Activated naive CD4-positive, alpha-beta T cell treated with anti-CD3 and anti-CD28 coated beads, Interleukin-2, amount 10 ng/mL, durations not matched to agents 7 days and 5 days (primary cell): ENCODE measurements at regions of chr7 and their contacts with region 1.

Region 1: DNA sequence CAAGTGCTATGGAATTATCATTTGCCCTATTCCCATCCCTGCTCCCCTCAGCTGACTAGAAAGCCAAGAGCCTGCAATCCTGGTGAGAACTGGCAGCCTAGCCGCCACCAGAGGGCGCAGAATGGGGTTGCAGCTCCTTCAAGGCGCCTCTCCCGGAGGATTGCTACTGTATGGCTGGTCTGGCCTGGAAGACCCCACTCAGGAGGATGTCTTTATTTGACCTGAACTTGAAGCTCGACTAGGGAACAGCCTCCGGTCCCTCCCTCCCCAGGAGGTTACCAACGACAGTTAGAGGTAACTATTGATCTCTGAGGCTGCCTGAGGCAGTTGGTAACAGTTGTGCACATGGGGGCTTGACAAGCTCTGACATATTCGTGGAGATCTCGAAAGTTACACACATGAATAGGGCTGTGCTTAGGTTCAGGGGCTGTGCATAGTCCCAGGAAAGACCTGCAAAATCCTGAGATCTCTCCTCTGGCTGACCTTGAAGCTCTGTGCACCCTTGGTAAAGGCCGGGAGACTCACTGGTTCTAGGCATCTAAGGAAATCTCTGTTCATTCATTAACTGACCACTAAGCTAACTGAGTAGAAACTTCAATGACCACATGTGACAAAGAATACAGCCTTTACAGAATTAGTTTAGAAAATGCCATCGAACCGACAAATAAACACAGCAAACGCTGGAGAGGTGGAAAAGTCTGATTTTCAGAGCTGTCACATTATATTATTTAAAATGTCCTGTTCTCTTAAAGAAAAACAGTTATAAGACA is 65.7 kb downstream of the TSPAN12 start:
- DNase-seq: peak; percentile 67
- H3K4me3 Mint-ChIP-seq: no peak overlapping the region
- H3K27ac Mint-ChIP-seq: no peak overlapping the region
- H3K4me1 Mint-ChIP-seq: no peaks in the 10 kb centered on the region
- H3K27me3 Mint-ChIP-seq: peaks cover 5% of the 10 kb centered on the region

Region 2: GRCh38 chr7:120805636-120806388 is 13.5 kb after region 1 on chr7:
- CTCF ChIA-PET with region 1: interaction called, 13 read pairs
- DNase-seq: peak; percentile 60
- H3K4me3 Mint-ChIP-seq: no peak overlapping the region
- H3K27ac Mint-ChIP-seq: no peak overlapping the region
- H3K4me1 Mint-ChIP-seq: no peaks in the 10 kb centered on the region
- H3K27me3 Mint-ChIP-seq: no peaks in the 10 kb centered on the region

Region 3: GRCh38 chr7:120941064-120941463 is 148.8 kb after region 1 on chr7:
- CTCF ChIA-PET with region 1: interaction called, 12 read pairs
- DNase-seq: no peak
- H3K4me3 Mint-ChIP-seq: no peak overlapping the region
- H3K27ac Mint-ChIP-seq: no peak overlapping the region
- H3K4me1 Mint-ChIP-seq: no peaks in the 10 kb centered on the region
- H3K27me3 Mint-ChIP-seq: peaks cover 9% of the 10 kb centered on the region

Region 4: DNA sequence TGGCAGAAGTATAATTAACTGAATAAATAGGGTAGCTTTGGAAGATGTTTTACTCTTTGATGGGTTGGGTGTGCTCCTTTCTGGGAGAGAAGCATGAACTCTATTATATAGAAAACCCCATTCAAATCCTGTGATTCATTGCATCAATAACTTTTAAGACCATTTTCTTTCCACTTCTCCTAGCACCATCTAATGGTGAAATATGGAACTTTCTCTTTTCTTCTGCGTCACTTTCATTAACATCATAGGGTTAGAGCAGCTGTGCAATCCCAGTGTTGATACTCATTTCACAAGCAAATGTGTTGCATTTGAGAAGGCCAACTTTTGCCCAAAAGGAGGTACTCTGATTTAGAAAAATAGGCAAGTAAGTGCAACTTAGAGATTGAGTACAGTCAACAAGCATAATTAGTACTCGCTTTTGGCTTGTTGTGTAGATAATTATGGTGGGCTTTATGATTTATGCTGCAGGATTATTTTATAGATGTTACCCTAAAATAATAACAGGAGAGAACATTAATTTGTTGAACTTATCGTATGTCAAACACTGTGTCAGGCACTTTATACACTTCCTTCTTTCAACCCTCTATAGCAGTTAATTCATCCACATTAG is 289.2 kb after region 1 on chr7:
- CTCF ChIA-PET with region 1: interaction called, 10 read pairs
- DNase-seq: no peak
- H3K4me3 Mint-ChIP-seq: no peak overlapping the region
- H3K27ac Mint-ChIP-seq: no peak overlapping the region
- H3K4me1 Mint-ChIP-seq: no peaks in the 10 kb centered on the region
- H3K27me3 Mint-ChIP-seq: peaks cover 9% of the 10 kb centered on the region

Region 5: DNA sequence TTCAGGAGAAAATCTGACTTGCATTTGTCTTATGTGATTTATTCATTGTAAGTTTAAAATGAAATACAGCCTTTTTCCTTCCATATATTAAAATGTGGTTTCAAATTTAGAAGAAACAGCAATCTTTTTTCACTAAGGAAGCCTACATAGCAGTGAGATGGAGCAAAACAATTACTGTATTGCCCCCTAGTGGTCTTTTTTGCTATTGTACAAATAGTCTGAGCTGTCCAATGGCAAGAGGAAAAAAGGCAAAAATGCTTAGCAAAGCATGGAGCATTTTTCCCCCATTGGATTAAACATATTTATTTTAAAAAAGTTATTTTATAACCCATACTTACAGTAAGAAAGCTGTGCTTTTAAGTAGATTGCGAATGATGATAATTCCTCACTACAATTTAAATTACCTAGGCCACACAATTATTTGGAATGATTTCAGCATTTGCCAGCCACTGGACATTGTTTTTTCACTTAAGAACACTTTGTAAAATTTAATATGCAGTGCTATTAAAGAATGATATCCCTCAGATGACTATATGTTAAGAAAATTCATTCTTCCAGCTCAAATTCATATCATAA is 315.7 kb after region 1 on chr7:
- CTCF ChIA-PET with region 1: interaction called, 13 read pairs
- DNase-seq: no peak
- H3K4me3 Mint-ChIP-seq: no peak overlapping the region
- H3K27ac Mint-ChIP-seq: no peak overlapping the region
- H3K4me1 Mint-ChIP-seq: no peaks in the 10 kb centered on the region
- H3K27me3 Mint-ChIP-seq: peaks cover 8% of the 10 kb centered on the region